ENCODE measurements at regions of chr12 and their contacts with region 1.

Region 1: DNA sequence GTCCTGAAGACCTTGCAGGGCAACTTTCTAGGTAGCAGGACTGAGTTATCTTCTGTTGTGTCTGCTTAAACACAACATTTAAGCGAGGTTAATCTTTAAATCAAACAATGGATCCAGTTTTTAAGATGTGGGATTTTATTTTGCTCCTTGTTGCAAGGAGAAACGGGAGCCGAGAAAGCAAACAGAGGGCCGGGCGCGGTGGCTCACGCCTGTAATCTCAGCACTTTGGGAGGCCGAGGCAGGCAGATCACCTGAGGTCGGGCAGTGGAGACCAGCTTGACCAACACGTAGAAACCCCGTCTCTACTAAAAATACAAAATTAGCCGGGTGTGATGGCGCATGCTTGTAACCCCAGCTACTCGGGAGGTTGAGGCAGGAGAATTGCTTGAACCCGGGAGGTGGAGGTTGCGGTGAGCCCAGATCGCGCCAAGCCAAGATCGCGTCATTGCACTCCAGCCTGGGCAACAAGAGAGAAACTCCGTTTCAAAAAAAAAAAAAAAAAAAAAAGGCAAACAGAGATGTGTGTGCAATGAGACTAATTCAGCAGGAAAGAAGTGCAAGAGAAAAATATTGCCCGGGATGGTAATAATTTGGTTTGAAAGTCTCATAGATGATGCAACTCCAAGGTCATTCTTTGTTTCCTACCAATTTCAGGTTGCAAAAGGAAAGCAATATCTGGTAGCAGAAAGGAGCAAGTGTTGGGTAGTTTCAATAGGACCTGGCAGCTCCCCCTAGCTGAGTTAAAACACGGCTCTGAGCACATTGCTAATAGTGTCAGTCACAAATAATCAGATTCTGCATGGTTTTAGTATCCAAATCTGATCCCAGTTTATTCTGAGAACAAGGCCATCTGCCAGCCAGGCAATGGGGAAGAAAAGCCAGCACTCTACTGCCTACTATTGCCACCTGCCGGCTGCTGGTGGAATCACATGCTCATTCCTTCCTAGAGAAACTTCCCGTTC is 141.4 kb downstream of the PPM1H start:
- DNase-seq: peak; percentile 74
- ATAC-seq: peak; percentile 80
- H3K4me3 ChIP-seq: no peak overlapping the region
- H3K27ac ChIP-seq: peak overlapping the region; percentile 76
- H3K4me1 ChIP-seq: peaks cover 8% of the 10 kb centered on the region; the same call in 1 of the 2 replicates
- H3K27me3 ChIP-seq: no peaks in the 10 kb centered on the region
- CTCF ChIP-seq: peak; percentile 93

Region 2: DNA sequence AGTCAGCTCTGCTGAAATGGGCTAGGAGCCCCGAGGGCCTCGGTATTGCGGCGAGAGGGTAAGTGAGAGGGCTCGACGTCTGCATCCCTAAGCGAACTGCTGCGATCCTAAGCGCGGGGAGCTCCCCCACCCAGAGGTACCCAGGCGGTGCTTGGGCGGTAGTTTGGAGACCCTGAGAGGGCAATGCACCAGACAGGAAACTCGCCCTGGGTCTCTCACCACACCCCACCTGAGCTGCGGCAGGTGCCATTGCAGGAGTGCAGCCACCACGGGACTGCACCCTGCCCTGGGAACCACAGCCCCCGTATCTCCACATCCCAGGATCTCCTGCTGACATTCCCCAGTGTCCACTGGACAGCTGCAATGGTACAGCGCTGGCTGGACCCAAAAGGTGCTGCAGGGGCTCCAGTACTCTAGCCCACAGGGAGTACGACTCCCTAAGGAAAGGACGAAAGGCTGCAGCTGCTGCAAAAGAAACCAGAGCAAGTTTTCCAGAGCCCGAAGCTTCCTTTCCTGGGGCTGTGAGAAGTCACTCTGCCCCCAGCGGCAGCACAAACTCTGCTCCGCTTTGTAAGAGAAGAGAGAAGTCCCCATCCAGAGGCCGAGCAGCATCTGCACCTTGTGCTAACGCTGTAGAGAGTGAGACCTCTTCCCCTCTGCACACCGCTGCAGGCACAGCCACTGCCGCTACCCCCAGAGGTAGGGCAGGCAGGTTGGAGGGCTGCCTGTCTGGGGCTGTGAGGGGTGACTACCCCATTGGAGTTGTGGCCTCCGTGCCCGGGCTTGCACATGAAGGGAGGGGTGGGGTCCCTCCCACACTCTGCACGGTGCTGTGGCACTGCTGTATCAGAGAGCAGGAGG is 358.0 kb before region 1 on chr12:
- CTCF ChIA-PET with region 1: interaction called, 3 read pairs
- POLR2A ChIA-PET with region 1: no interaction called
- in situ Hi-C with region 1: no loop called
- intact Hi-C with region 1: loop called (anchors 5 kb)
- DNase-seq: peak; percentile 15
- ATAC-seq: peak; percentile 95
- H3K4me3 ChIP-seq: peak overlapping the region; percentile 49 to 66
- H3K27ac ChIP-seq: no peak overlapping the region
- H3K4me1 ChIP-seq: no peaks in the 10 kb centered on the region; the same call in 1 of the 2 replicates
- H3K27me3 ChIP-seq: peaks cover 10% of the 10 kb centered on the region; the same call in 1 of the 2 replicates
- CTCF ChIP-seq: peak; percentile 81

Region 3: GRCh38 chr12:62581288-62582064 is 212.1 kb before region 1 on chr12:
- CTCF ChIA-PET with region 1: interaction called, 7 read pairs
- POLR2A ChIA-PET with region 1: no interaction called
- in situ Hi-C with region 1: no loop called
- intact Hi-C with region 1: loop called (anchors 5 kb)
- DNase-seq: no peak
- ATAC-seq: peak; percentile 87
- H3K4me3 ChIP-seq: no peak overlapping the region
- H3K27ac ChIP-seq: no peak overlapping the region
- H3K4me1 ChIP-seq: no peaks in the 10 kb centered on the region
- H3K27me3 ChIP-seq: no peaks in the 10 kb centered on the region
- CTCF ChIP-seq: peak; percentile 78

Region 4: DNA sequence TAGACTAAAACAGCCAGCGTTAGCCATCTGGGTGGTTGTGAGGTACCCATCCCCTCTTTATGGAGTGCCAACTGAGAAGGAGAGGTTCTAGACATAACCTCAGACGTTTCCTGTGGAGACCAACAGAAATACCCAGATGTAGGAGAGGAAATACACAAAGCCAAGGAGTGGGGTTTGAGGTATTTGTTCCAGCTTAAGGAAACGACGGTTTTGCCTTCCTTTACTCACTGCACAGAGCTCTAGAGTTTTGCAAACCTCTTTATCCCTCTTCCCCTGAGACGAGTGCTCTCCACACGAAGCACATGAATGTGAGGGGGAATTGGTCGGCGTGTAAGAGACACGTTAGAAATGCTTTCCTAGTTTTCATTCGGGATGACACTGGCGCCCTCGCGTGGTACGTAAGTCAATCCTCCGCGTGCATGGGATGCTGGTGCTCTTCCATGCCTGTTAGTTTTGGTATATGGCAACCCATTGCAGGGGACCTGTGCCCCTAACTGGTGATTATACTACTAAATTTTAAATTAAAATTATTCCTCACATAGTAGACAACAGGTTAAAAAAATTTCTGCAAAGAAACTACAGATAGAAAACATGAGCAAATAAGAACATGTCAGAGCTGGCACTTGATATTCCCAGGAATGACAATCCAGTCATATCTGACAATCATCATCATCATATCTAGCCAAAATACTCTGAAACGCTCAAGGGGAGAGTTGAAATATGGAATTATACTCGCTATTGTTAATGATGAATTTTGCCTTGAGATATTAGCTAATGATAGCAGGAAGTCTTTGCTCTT is 19.7 kb after region 1 on chr12:
- CTCF ChIA-PET with region 1: no interaction called
- POLR2A ChIA-PET with region 1: no interaction called
- in situ Hi-C with region 1: no loop called
- intact Hi-C with region 1: no loop called
- DNase-seq: peak; percentile 42
- ATAC-seq: peak; percentile 95
- H3K4me3 ChIP-seq: peak overlapping the region in 1 of 2 experiments; percentile 32; a peak in 2 of 4 replicates
- H3K27ac ChIP-seq: peak overlapping the region; percentile 12
- H3K4me1 ChIP-seq: no peaks in the 10 kb centered on the region
- H3K27me3 ChIP-seq: no peaks in the 10 kb centered on the region
- CTCF ChIP-seq: peak; percentile 91

Measured in Panc1 (cell line).